PC-9 (cell line): ENCODE measurements at regions of chr19 and their contacts with region 1.

Region 1: GRCh38 chr19:3224346-3225168 is at the start of gene CELF5:
- DNase-seq: peak in 1 of 2 experiments; percentile 38
- H3K4me3 ChIP-seq: no peak within 1 kb of the TSS
- H3K27ac ChIP-seq: no peak within 1 kb of the TSS
- H3K4me1 ChIP-seq: no peaks in the 10 kb centered on the region
- H3K27me3 ChIP-seq: 0 out of 2 replicates have a peak, but pooled peaks cover 8% of the 10 kb centered on the region
- CTCF ChIP-seq: peak; percentile 50
- total RNA-seq, gene CELF5: 0.20 and 0.48 TPM in 2 replicates

Region 2: DNA sequence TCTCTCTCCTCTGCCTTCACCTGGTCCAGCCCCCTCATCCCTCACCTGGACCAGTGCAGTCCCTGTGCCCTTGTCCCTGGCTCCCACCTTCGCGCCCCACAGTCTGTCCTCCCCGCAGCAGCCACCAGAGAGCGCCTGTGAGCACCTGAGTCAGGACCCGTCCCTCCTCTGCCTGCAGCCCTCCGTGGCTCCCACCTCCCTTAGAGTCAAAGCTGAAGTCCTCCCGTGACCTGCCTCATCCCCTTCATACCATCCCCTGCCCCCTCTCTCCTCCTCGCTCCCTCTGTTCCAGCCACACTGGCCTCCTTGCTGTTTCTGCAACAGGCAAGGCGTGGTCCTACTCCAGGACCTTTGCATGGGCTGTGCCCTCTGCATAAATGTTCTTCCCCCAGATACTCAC is 10.2 kb after region 1 on chr19:
- CTCF ChIA-PET with region 1: no interaction called
- POLR2A ChIA-PET with region 1: interaction called, 12 read pairs
- intact Hi-C with region 1: no loop called
- DNase-seq: no peak
- H3K4me3 ChIP-seq: no peak overlapping the region
- H3K27ac ChIP-seq: no peak overlapping the region
- H3K4me1 ChIP-seq: no peaks in the 10 kb centered on the region
- H3K27me3 ChIP-seq: peaks cover 5% of the 10 kb centered on the region
- CTCF ChIP-seq: peak; percentile 40

Region 3: DNA sequence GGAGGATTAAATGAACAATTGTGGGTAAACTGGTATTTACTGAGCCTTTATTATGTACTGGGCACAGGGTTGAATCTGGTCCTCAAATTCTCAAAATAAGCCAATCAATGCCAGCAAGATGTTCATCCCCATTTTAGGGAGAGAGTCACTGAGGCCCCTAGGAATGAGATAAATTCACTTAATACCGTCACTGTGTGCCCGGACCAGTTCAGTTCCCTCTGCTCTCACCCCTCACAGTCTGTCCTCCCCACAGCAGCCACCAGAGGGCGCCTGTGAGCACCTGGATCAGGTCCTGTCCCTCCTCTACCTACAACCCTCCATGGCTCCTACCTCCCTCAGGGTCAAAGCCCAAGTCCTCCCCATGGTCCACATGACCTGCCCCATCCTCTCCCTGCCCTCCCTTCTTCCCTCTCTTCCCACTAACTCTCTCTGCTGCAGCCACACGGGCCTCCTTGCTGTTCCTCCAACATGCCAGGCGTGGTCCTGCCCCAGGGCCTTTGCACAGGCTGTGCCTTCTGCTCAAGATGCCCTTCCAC is 99.8 kb after region 1 on chr19:
- CTCF ChIA-PET with region 1: no interaction called
- POLR2A ChIA-PET with region 1: no interaction called
- intact Hi-C with region 1: no loop called
- DNase-seq: peak in 1 of 2 experiments; percentile 46
- H3K4me3 ChIP-seq: no peak overlapping the region
- H3K27ac ChIP-seq: no peak overlapping the region
- H3K4me1 ChIP-seq: no peaks in the 10 kb centered on the region
- H3K27me3 ChIP-seq: no peaks in the 10 kb centered on the region
- CTCF ChIP-seq: peak; percentile 81

Region 4: GRCh38 chr19:3365836-3366752 is 141.5 kb after region 1 on chr19 and contains the start of gene NFIC:
- CTCF ChIA-PET with region 1: no interaction called
- POLR2A ChIA-PET with region 1: no interaction called
- intact Hi-C with region 1: no loop called
- DNase-seq: peak; percentile 43 to 47
- H3K4me3 ChIP-seq: peak within 1 kb of the TSS; percentile 71
- H3K27ac ChIP-seq: no peak within 1 kb of the TSS
- H3K4me1 ChIP-seq: 0 out of 2 replicates have a peak, but pooled peaks cover 4% of the 10 kb centered on the region
- H3K27me3 ChIP-seq: no peaks in the 10 kb centered on the region
- CTCF ChIP-seq: no peak
- total RNA-seq, gene NFIC: 71.1 and 75.6 TPM in 2 replicates